ENCODE measurements at regions of chr10 and their contacts with region 1.

Region 1: GRCh38 chr10:89837150-89837888 is 135.9 kb downstream of the KIF20B start:
- DNase-seq: no peak
- H3K4me3 ChIP-seq: peak overlapping the region; percentile 17 to 34 (median 27)
- H3K27ac ChIP-seq: no peak overlapping the region
- H3K4me1 ChIP-seq: peaks cover 9% of the 10 kb centered on the region
- H3K27me3 ChIP-seq: no peaks in the 10 kb centered on the region
- CTCF ChIP-seq: no peak

Region 2: GRCh38 chr10:89805599-89806013 is 31.7 kb before region 1 on chr10:
- CTCF ChIA-PET with region 1: no interaction called
- dilution Hi-C with region 1: no loop called
- in situ Hi-C with region 1: no loop called
- intact Hi-C with region 1: loop called (anchors 2 kb)
- DNase-seq: no peak
- H3K4me3 ChIP-seq: no peak overlapping the region
- H3K27ac ChIP-seq: no peak overlapping the region
- H3K4me1 ChIP-seq: no peaks in the 10 kb centered on the region
- H3K27me3 ChIP-seq: no peaks in the 10 kb centered on the region
- CTCF ChIP-seq: no peak

Measured in mammary epithelial cell (primary cell).